Right ventricle myocardium inferior (tissue), 1 donor: ENCODE measurements at regions of chr11 and their contacts with region 1.

Region 1: DNA sequence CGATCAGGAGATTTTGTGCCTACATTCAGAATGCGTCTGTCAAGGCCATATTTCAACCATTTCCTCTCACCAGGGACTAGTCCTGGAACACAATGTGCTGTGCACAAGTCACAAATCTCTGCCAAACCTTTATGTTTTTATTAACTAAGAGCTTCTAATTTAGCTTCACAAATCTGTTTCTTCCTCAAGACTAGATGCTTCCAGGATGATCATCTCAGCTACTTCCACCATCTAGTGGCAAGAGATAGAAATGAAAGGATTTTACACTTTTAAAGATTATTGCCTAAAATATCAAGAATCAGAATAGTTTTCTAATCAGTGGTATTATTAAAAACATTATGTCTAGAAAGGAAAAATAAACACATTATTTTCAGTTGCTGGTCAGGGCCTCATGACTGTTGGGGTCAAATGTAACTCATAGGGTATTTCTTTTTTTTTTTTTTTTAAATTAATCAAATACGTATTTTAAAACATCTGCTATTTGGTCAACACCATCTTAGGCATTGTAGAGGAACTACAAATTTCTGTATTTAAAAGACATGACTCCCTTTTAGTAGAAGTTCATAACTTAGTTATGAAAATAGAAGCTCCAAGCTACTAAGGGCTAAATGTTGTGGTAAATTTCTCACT is 1102.6 kb downstream of the DLG2 start:
- DNase-seq: no peak
- ATAC-seq: no peak

Region 2: GRCh38 chr11:83836883-83837654 is 687.5 kb before region 1 on chr11:
- intact Hi-C with region 1: loop called (anchors 5 kb)
- DNase-seq: no peak
- ATAC-seq: peak; percentile 80

Region 3: GRCh38 chr11:84398017-84398626 is 126.4 kb before region 1 on chr11:
- intact Hi-C with region 1: loop called (anchors 10 kb)
- DNase-seq: no peak
- ATAC-seq: no peak

Region 4: GRCh38 chr11:84573868-84574267 is 49.3 kb after region 1 on chr11:
- intact Hi-C with region 1: no loop called
- DNase-seq: no peak
- ATAC-seq: no peak